ENCODE measurements at regions of chr7 and their contacts with region 1.

Region 1: GRCh38 chr7:116588641-116589594 is 64.1 kb downstream of the CAV1 start:
- DNase-seq: peak; percentile 61 to 73 (median 66)
- H3K4me3 ChIP-seq: no peak overlapping the region
- H3K27ac ChIP-seq: no peak overlapping the region
- H3K4me1 ChIP-seq: peaks cover 20 to 38% (median 26%) of the 10 kb centered on the region in 4 experiments
- H3K27me3 ChIP-seq: no peaks in the 10 kb centered on the region

Region 2: DNA sequence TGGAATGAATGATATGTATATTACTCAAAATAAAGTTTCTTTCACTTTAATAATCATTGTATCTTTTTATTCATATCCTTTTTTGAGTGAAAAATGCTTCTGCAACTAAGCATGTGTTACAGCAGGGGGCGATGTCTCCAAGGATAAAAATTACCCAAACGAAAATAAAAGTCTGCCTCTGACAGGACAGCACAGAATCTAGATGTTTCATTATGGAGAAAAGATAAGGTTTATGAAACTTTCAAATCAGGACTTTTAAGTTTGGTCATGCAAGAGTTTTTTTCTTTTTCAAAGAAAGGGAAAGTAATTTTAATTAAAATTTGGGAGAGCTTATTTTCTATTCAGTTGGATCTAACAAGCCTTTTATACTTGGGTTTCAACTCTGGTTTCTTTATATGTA is 330.2 kb before region 1 on chr7:
- CTCF ChIA-PET with region 1: interaction called, 68 read pairs
- POLR2A ChIA-PET with region 1: no interaction called
- DNase-seq: peak; percentile 52 to 80 (median 73)
- H3K4me3 ChIP-seq: no peak overlapping the region
- H3K27ac ChIP-seq: no peak overlapping the region
- H3K4me1 ChIP-seq: no peaks in the 10 kb centered on the region
- H3K27me3 ChIP-seq: no peaks in the 10 kb centered on the region

Region 3: GRCh38 chr7:116525913-116526861 is 62.7 kb before region 1 on chr7:
- CTCF ChIA-PET with region 1: interaction called, 17 read pairs
- POLR2A ChIA-PET with region 1: no interaction called
- DNase-seq: peak; percentile 70 to 82 (median 76)
- H3K4me3 ChIP-seq: peak overlapping the region; percentile 17 to 83 (median 54)
- H3K27ac ChIP-seq: no peak overlapping the region
- H3K4me1 ChIP-seq: peaks cover 0 to 28% (median 22%) of the 10 kb centered on the region in 4 experiments
- H3K27me3 ChIP-seq: peaks cover 10 to 57% (median 37%) of the 10 kb centered on the region in 5 experiments

Region 4: DNA sequence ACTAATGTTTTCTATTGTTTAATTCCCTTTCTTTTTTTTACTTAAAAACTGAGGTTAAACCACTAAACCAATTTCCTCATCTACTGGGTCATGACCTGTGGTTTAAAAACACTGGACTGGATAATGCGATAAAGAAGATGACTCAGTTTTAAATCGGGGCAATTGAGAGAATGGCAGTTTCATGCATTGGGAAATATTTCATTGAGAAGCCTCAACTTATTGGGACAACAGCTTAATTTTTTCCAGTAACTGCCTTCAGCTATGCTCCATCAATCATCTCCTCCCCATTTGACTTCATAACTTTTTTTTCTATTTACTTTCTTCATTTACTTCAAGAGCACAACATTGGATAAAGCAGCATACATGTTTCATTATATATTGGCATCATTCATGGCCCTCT is 21.3 kb after region 1 on chr7:
- CTCF ChIA-PET with region 1: interaction called, 37 read pairs
- POLR2A ChIA-PET with region 1: no interaction called
- DNase-seq: peak; percentile 74 to 93 (median 90)
- H3K4me3 ChIP-seq: no peak overlapping the region
- H3K27ac ChIP-seq: no peak overlapping the region
- H3K4me1 ChIP-seq: peaks cover 4 to 12% (median 6%) of the 10 kb centered on the region in 4 experiments
- H3K27me3 ChIP-seq: peaks cover 0 to 6% (median 0%) of the 10 kb centered on the region in 5 experiments

Region 5: DNA sequence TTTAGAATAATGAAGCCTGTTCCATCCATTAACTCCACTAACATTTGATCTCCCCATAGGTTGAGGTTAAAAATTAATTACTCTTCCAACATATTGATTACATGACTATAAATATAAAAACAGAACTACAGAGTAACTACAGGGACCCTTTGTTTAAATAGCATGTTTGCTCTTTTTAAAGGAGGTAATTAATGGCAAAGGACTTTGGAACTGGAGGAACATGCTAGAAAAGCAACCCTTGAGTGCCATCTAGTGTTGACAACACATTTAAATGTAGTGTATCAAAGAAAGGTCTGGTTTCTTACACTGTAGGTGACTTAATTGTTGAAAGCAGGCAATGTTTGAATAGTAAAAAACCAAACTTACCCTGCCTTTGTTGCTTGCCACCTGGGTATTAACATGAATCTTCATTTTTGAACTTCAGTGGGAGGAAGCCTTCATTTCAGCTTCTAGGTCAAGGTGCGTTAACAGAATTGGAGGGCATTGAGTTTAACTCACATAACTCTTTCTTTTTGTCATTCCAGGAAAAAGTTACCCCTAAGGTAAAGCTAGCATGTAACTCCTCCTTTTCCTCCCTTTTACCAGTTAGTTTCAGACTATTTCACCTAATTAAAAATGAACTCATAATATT is 220.8 kb after region 1 on chr7:
- CTCF ChIA-PET with region 1: interaction called, 31 read pairs
- POLR2A ChIA-PET with region 1: no interaction called
- DNase-seq: peak; percentile 69 to 81 (median 76)
- H3K4me3 ChIP-seq: no peak overlapping the region
- H3K27ac ChIP-seq: no peak overlapping the region
- H3K4me1 ChIP-seq: peaks cover 0 to 11% (median 2%) of the 10 kb centered on the region in 4 experiments
- H3K27me3 ChIP-seq: no peaks in the 10 kb centered on the region

Measured in common myeloid progenitor, CD34-positive (primary cell).